ENCODE measurements at regions of chrX and their contacts with region 1.

Region 1: GRCh38 chrX:102599084-102599950 is at the start of gene ARMCX5:
- DNase-seq: peak; percentile 26 to 82 (median 74)
- ATAC-seq: peak; percentile 93
- H3K4me3 ChIP-seq: peak within 1 kb of the TSS; percentile 98
- H3K4me3 Mint-ChIP-seq: peak within 1 kb of the TSS; percentile 83 to 99 (median 96)
- H3K27ac ChIP-seq: peak within 1 kb of the TSS; percentile 79
- H3K27ac Mint-ChIP-seq: peak within 1 kb of the TSS; percentile 92 to 99 (median 97)
- H3K4me1 ChIP-seq: peaks cover 2 to 3% of the 10 kb centered on the region in 2 donors
- H3K4me1 Mint-ChIP-seq: peaks cover 0 to 53% (median 39%) of the 10 kb centered on the region in 7 donors
- H3K27me3 ChIP-seq: no peaks in the 10 kb centered on the region
- H3K27me3 Mint-ChIP-seq: no peaks in the 10 kb centered on the region
- total RNA-seq, gene ARMCX5: 8.2 to 13.1 (median 12.3) TPM

Region 2: GRCh38 chrX:101931488-101932248 is 667.6 kb before region 1 on chrX and contains the start of gene ZMAT1:
- CTCF ChIA-PET with region 1: no interaction called
- POLR2A ChIA-PET with region 1: no interaction called
- intact Hi-C with region 1: loop called in 1 of 2 experiments (anchors 5 kb)
- DNase-seq: peak; percentile 73 to 92 (median 87)
- ATAC-seq: peak; percentile 93
- H3K4me3 ChIP-seq: peak within 1 kb of the TSS; percentile 63
- H3K4me3 Mint-ChIP-seq: peak within 1 kb of the TSS; percentile 80 to 95 (median 88)
- H3K27ac ChIP-seq: peak within 1 kb of the TSS; percentile 89
- H3K27ac Mint-ChIP-seq: peak within 1 kb of the TSS; percentile 87 to 99 (median 96)
- H3K4me1 ChIP-seq: peaks cover 0 to 8% of the 10 kb centered on the region in 2 donors
- H3K4me1 Mint-ChIP-seq: peaks cover 8 to 44% (median 33%) of the 10 kb centered on the region in 7 donors
- H3K27me3 ChIP-seq: no peaks in the 10 kb centered on the region
- H3K27me3 Mint-ChIP-seq: no peaks in the 10 kb centered on the region
- total RNA-seq, gene ZMAT1: 3.0 to 48.3 (median 32.2) TPM

Region 3: GRCh38 chrX:102560423-102561068 is 38.8 kb before region 1 on chrX:
- CTCF ChIA-PET with region 1: no interaction called
- POLR2A ChIA-PET with region 1: no interaction called
- intact Hi-C with region 1: no loop called
- DNase-seq: no peak
- ATAC-seq: no peak
- H3K4me3 ChIP-seq: no peak overlapping the region
- H3K4me3 Mint-ChIP-seq: no peak overlapping the region
- H3K27ac ChIP-seq: no peak overlapping the region
- H3K27ac Mint-ChIP-seq: no peak overlapping the region
- H3K4me1 ChIP-seq: no peaks in the 10 kb centered on the region
- H3K4me1 Mint-ChIP-seq: no peaks in the 10 kb centered on the region
- H3K27me3 ChIP-seq: no peaks in the 10 kb centered on the region
- H3K27me3 Mint-ChIP-seq: no peaks in the 10 kb centered on the region

Region 4: GRCh38 chrX:102580891-102581290 is 18.4 kb before region 1 on chrX:
- CTCF ChIA-PET with region 1: no interaction called
- POLR2A ChIA-PET with region 1: no interaction called
- intact Hi-C with region 1: no loop called
- DNase-seq: no peak
- ATAC-seq: no peak
- H3K4me3 ChIP-seq: no peak overlapping the region
- H3K4me3 Mint-ChIP-seq: no peak overlapping the region
- H3K27ac ChIP-seq: no peak overlapping the region
- H3K27ac Mint-ChIP-seq: no peak overlapping the region
- H3K4me1 ChIP-seq: no peaks in the 10 kb centered on the region
- H3K4me1 Mint-ChIP-seq: no peaks in the 10 kb centered on the region
- H3K27me3 ChIP-seq: no peaks in the 10 kb centered on the region
- H3K27me3 Mint-ChIP-seq: peaks cover 0 to 5% (median 0%) of the 10 kb centered on the region in 5 donors

Region 5: GRCh38 chrX:102652031-102652688 is 52.8 kb after region 1 on chrX:
- CTCF ChIA-PET with region 1: no interaction called
- POLR2A ChIA-PET with region 1: interaction called, 22 read pairs
- intact Hi-C with region 1: loop called (anchors 1 to 2 kb)
- DNase-seq: peak in 8 of 9 donors; percentile 19 to 83 (median 78)
- ATAC-seq: peak; percentile 89
- H3K4me3 ChIP-seq: peak overlapping the region; percentile 83
- H3K4me3 Mint-ChIP-seq: peak overlapping the region; percentile 83 to 100 (median 94)
- H3K27ac ChIP-seq: peak overlapping the region; percentile 88
- H3K27ac Mint-ChIP-seq: peak overlapping the region; percentile 69 to 99 (median 95)
- H3K4me1 ChIP-seq: peaks cover 4 to 5% of the 10 kb centered on the region in 2 donors
- H3K4me1 Mint-ChIP-seq: peaks cover 13 to 48% (median 35%) of the 10 kb centered on the region in 7 donors
- H3K27me3 ChIP-seq: no peaks in the 10 kb centered on the region
- H3K27me3 Mint-ChIP-seq: peaks cover 0 to 9% (median 0%) of the 10 kb centered on the region in 5 donors

Region 6: DNA sequence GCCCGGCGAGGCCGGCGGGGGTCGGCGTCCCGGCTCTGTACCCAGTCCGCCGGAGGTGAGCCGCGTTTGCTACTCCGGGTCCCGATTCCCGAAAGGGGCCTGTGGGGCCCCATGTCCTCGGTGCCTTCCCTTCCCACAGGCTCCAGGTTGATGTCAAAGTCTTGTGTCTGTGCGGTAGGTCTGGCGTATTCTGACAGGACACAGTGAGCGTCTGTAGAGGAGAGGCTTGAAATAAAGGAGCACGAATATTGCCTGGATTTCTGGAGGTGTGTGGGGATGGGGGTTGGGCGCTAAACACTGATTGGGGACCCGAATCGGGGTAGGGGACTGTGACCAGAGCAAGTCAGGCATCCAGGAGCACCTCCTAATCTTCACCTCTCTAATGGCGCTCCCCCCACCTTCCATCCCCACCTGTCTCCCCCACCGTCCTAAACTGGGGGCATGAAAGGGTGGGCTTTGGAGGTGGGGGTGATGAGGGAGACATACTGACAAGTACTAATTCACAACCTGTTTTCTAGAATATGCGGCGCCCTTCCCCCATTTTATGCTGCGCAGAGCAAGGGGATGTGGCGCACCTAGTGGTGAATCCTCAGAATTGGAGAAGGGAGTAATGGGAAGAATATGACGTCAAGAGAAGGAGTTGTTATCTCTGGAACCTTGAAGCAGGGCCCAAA is 113.8 kb after region 1 on chrX:
- CTCF ChIA-PET with region 1: no interaction called
- POLR2A ChIA-PET with region 1: interaction called, 4 read pairs
- intact Hi-C with region 1: loop called in 1 of 2 experiments (anchors 1 kb)
- DNase-seq: peak in 7 of 9 donors; percentile 9 to 33 (median 23)
- ATAC-seq: no peak
- H3K4me3 ChIP-seq: peak overlapping the region; percentile 50
- H3K4me3 Mint-ChIP-seq: peak overlapping the region; percentile 70 to 94 (median 88)
- H3K27ac ChIP-seq: peak overlapping the region; percentile 14
- H3K27ac Mint-ChIP-seq: peak overlapping the region in 6 of 9 donors; percentile 36 to 93 (median 56)
- H3K4me1 ChIP-seq: peaks cover 0 to 8% of the 10 kb centered on the region in 2 donors
- H3K4me1 Mint-ChIP-seq: peaks cover 5 to 36% (median 25%) of the 10 kb centered on the region in 7 donors
- H3K27me3 ChIP-seq: no peaks in the 10 kb centered on the region
- H3K27me3 Mint-ChIP-seq: peaks cover 5 to 31% (median 8%) of the 10 kb centered on the region in 5 donors

Region 7: GRCh38 chrX:102728641-102729040 is 129.3 kb after region 1 on chrX:
- CTCF ChIA-PET with region 1: no interaction called
- POLR2A ChIA-PET with region 1: no interaction called
- intact Hi-C with region 1: no loop called
- DNase-seq: no peak
- ATAC-seq: no peak
- H3K4me3 ChIP-seq: no peak overlapping the region
- H3K4me3 Mint-ChIP-seq: no peak overlapping the region
- H3K27ac ChIP-seq: no peak overlapping the region
- H3K27ac Mint-ChIP-seq: no peak overlapping the region
- H3K4me1 ChIP-seq: no peaks in the 10 kb centered on the region
- H3K4me1 Mint-ChIP-seq: peaks cover 0 to 3% (median 0%) of the 10 kb centered on the region in 7 donors
- H3K27me3 ChIP-seq: no peaks in the 10 kb centered on the region
- H3K27me3 Mint-ChIP-seq: no peaks in the 10 kb centered on the region

Region 8: GRCh38 chrX:102835504-102836146 is 236.3 kb after region 1 on chrX:
- CTCF ChIA-PET with region 1: no interaction called
- POLR2A ChIA-PET with region 1: no interaction called
- intact Hi-C with region 1: loop called in 1 of 2 experiments (anchors 1 kb)
- DNase-seq: peak in 5 of 9 donors; percentile 2 to 17 (median 11)
- ATAC-seq: no peak
- H3K4me3 ChIP-seq: no peak overlapping the region
- H3K4me3 Mint-ChIP-seq: no peak overlapping the region
- H3K27ac ChIP-seq: no peak overlapping the region
- H3K27ac Mint-ChIP-seq: no peak overlapping the region
- H3K4me1 ChIP-seq: no peaks in the 10 kb centered on the region
- H3K4me1 Mint-ChIP-seq: no peaks in the 10 kb centered on the region
- H3K27me3 ChIP-seq: no peaks in the 10 kb centered on the region
- H3K27me3 Mint-ChIP-seq: no peaks in the 10 kb centered on the region

Region 9: DNA sequence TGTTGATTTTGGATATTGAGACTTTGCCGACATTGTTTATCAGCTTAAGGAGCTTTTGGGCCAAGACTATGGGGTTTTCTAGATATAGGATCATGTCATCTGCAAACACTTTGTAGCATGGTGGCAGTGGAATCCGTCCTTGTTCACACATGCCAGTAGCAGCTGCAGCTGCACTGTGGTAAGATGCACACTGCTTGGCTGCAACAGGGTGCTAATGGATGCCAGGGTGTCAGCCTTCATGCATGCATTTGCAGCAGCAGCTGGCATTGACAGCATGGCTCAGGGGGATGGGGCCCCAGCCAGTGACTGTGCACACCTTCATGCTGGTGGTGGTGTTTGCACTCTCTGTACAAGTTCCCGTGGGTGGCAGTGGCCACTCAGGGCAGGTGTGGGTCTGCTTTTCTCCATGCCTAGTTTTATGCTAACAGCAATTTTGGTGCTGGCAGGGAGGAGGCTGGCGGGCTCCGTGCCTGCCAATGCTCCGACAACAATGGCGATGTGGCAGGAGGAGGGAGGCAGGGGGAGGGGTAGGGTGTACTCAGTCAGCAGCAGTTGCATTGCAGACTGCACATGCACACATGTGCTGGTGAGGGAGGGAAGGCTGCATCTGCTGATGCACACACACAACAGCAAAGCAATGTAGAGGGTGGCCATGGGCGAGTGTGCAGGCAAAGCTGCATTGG is 814.5 kb after region 1 on chrX:
- CTCF ChIA-PET with region 1: no interaction called
- POLR2A ChIA-PET with region 1: no interaction called
- intact Hi-C with region 1: no loop called
- DNase-seq: no peak
- ATAC-seq: no peak
- H3K4me3 ChIP-seq: no peak overlapping the region
- H3K4me3 Mint-ChIP-seq: no peak overlapping the region
- H3K27ac ChIP-seq: no peak overlapping the region
- H3K27ac Mint-ChIP-seq: peak overlapping the region in 1 of 9 donors; percentile 22
- H3K4me1 ChIP-seq: no peaks in the 10 kb centered on the region
- H3K4me1 Mint-ChIP-seq: no peaks in the 10 kb centered on the region
- H3K27me3 ChIP-seq: no peaks in the 10 kb centered on the region
- H3K27me3 Mint-ChIP-seq: peaks cover 0 to 3% (median 0%) of the 10 kb centered on the region in 5 donors